CD8-positive, alpha-beta memory T cell (primary cell): ENCODE measurements at regions of chr17 and their contacts with region 1.

Region 1: GRCh38 chr17:68205251-68205807 is 42.5 kb upstream of the AMZ2 start:
- DNase-seq: peak; percentile 88 to 92 (median 90)
- H3K4me3 ChIP-seq: peak overlapping the region; percentile 58
- H3K4me3 Mint-ChIP-seq: peak overlapping the region; percentile 87 to 97 (median 91)
- H3K27ac ChIP-seq: peak overlapping the region; percentile 69
- H3K27ac Mint-ChIP-seq: peak overlapping the region; percentile 84 to 96 (median 90)
- H3K4me1 ChIP-seq: peaks cover 14% of the 10 kb centered on the region
- H3K4me1 Mint-ChIP-seq: peaks cover 29 to 48% (median 32%) of the 10 kb centered on the region in 3 donors
- H3K27me3 ChIP-seq: no peaks in the 10 kb centered on the region
- H3K27me3 Mint-ChIP-seq: peaks cover 0 to 2% of the 10 kb centered on the region in 2 donors

Region 2: DNA sequence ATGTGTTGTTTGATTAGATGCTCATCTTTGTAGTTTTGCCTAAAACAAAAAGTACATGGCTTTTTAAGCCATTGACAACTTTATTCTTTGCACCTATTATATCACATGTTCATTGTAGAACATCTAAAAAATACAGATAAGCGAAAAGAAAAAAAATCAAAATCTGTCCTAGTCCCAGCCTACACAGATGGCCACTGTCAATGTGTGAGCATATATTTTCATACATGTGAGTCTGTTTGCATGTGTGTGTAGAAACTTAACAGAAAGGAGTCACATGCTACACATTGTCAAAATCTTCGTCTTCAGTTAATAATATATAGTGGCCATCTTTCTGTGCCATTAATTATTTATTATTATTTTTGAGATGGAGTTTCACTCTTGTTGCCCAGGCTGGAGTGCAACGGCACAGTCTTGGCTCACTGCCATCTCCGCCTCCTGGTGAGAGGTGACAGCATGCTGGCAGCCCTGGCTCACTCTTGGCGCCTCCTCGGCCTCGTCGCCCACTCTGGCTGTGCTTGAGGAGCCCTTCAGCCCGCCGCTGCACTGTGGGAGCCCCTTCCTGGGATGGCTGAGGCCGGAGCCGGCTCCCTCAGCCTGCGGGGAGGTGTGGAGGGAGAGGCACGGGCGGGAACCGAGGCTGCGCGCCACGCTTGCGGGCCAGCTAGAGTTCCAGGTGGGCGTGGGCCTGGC is 25.9 kb before region 1 on chr17:
- CTCF ChIA-PET with region 1: interaction called, 183 read pairs
- POLR2A ChIA-PET with region 1: interaction called, 171 read pairs
- DNase-seq: no peak
- H3K4me3 ChIP-seq: no peak overlapping the region
- H3K4me3 Mint-ChIP-seq: peak overlapping the region in 1 of 7 donors; percentile 24
- H3K27ac ChIP-seq: no peak overlapping the region
- H3K27ac Mint-ChIP-seq: no peak overlapping the region
- H3K4me1 ChIP-seq: peaks cover 31% of the 10 kb centered on the region
- H3K4me1 Mint-ChIP-seq: peaks cover 33 to 62% (median 33%) of the 10 kb centered on the region in 3 donors
- H3K27me3 ChIP-seq: no peaks in the 10 kb centered on the region
- H3K27me3 Mint-ChIP-seq: no peaks in the 10 kb centered on the region

Region 3: GRCh38 chr17:68190495-68190894 is 14.8 kb before region 1 on chr17:
- CTCF ChIA-PET with region 1: interaction called, 183 read pairs
- POLR2A ChIA-PET with region 1: interaction called, 171 read pairs
- DNase-seq: no peak
- H3K4me3 ChIP-seq: no peak overlapping the region
- H3K4me3 Mint-ChIP-seq: no peak overlapping the region
- H3K27ac ChIP-seq: no peak overlapping the region
- H3K27ac Mint-ChIP-seq: peak overlapping the region in 7 of 8 donors; percentile 14 to 74 (median 55)
- H3K4me1 ChIP-seq: peaks cover 14% of the 10 kb centered on the region
- H3K4me1 Mint-ChIP-seq: peaks cover 25 to 70% (median 62%) of the 10 kb centered on the region in 3 donors
- H3K27me3 ChIP-seq: no peaks in the 10 kb centered on the region
- H3K27me3 Mint-ChIP-seq: peaks cover 0 to 2% of the 10 kb centered on the region in 2 donors

Region 4: DNA sequence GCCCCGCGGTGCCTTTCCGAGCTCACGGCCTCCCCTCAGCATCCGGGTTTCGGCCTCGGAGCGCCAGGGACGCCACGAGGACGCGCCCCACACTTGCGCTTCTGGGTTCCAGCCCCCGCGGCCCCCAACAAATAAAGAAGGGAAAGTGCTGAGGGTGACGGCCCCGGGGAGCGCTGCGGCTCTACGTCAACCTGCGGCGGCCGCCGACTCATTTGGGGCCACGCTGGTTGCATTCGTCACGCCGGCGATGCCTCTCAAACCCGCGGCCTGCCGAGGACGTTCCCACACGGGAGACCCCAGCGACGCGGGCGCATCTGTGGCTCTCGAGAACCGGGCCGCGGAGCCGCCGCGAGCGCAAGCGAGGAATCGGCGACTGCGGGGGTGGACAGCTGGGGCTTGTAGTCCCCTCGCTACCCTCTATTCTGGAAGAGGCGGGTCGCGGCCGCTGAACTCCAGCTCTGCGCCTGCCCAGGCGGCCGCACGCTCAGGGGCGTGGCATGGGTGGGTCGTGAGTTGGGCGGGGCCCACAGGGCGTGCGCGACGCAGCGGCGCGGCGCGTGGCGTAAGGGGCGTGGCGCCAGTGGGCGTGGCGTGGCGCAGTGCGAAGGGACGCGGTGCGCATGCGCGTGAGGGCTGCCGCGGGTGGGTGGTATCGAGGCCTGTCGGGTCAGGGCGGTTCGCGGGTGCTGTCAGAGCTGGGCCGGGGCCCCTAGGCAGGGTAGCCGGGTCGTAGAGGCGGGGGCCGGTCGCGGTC is 42.3 kb after region 1 on chr17 and contains the start of gene AMZ2:
- CTCF ChIA-PET with region 1: interaction called, 34 read pairs
- POLR2A ChIA-PET with region 1: interaction called, 53 read pairs
- DNase-seq: peak; percentile 95 to 99 (median 98)
- H3K4me3 ChIP-seq: peak within 1 kb of the TSS; percentile 97
- H3K4me3 Mint-ChIP-seq: peak within 1 kb of the TSS; percentile 87 to 98 (median 96)
- H3K27ac ChIP-seq: peak within 1 kb of the TSS; percentile 96
- H3K27ac Mint-ChIP-seq: peak within 1 kb of the TSS; percentile 96 to 100 (median 98)
- H3K4me1 ChIP-seq: peaks cover 34% of the 10 kb centered on the region
- H3K4me1 Mint-ChIP-seq: peaks cover 35 to 63% (median 53%) of the 10 kb centered on the region in 3 donors
- H3K27me3 ChIP-seq: no peaks in the 10 kb centered on the region
- H3K27me3 Mint-ChIP-seq: peaks cover 0 to 8% of the 10 kb centered on the region in 2 donors
- total RNA-seq, gene AMZ2: 113 to 118 TPM

Region 5: DNA sequence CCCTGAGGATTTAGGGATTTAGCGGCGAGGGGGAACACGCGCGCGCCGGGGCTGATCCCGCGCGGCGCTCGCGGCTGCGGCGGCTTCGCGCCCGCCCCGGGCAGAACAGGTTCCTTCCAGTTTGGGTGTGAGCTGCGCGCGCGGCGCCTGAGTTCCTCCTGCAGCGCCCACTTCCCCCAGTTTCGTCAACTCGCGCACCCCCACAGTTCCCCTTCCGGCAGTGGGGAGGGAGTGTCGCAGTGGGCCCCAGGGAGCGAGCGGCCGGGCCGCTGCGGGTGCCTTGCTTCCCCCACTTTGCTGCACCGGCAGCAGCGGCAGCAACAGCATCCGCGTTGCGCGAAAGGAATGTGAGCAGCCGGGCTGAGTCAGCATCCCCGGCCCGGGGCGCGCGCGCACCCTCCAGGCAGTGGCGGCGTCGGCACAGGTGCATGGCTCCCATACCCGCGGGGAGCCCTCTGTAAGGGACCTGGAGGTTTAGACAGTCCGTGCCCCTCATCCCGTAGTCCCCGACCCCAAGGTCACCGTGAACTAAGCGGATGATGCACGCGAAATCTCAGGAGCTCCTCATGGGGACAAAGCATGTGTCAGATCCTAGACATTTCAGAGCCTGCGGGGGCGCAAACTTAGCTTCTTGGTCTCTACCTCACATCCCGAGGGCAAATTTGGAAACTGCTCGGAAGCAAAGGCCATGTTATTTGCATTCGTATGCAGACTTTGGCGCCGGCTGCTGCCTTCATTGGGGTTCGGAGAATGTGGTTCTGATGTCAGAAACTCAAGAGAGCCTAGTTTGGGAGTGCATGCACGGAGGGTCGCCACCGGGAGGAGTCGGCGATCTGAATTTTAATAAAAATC is 86.7 kb after region 1 on chr17:
- CTCF ChIA-PET with region 1: interaction called, 4 read pairs
- POLR2A ChIA-PET with region 1: interaction called, 16 read pairs
- DNase-seq: peak; percentile 92 to 98 (median 97)
- H3K4me3 ChIP-seq: peak overlapping the region; percentile 68
- H3K4me3 Mint-ChIP-seq: peak overlapping the region; percentile 84 to 100 (median 85)
- H3K27ac ChIP-seq: peak overlapping the region; percentile 94
- H3K27ac Mint-ChIP-seq: peak overlapping the region; percentile 84 to 100 (median 94)
- H3K4me1 ChIP-seq: peaks cover 61% of the 10 kb centered on the region
- H3K4me1 Mint-ChIP-seq: peaks cover 55 to 83% (median 69%) of the 10 kb centered on the region in 3 donors
- H3K27me3 ChIP-seq: no peaks in the 10 kb centered on the region
- H3K27me3 Mint-ChIP-seq: no peaks in the 10 kb centered on the region

Region 6: GRCh38 chr17:68457539-68458259 is 252.4 kb after region 1 on chr17:
- CTCF ChIA-PET with region 1: interaction called, 10 read pairs
- POLR2A ChIA-PET with region 1: interaction called, 5 read pairs
- DNase-seq: peak; percentile 98 to 99 (median 99)
- H3K4me3 ChIP-seq: peak overlapping the region; percentile 69
- H3K4me3 Mint-ChIP-seq: peak overlapping the region; percentile 87 to 91 (median 89)
- H3K27ac ChIP-seq: peak overlapping the region; percentile 64
- H3K27ac Mint-ChIP-seq: peak overlapping the region; percentile 57 to 98 (median 93)
- H3K4me1 ChIP-seq: peaks cover 53% of the 10 kb centered on the region
- H3K4me1 Mint-ChIP-seq: peaks cover 60 to 68% (median 64%) of the 10 kb centered on the region in 3 donors
- H3K27me3 ChIP-seq: no peaks in the 10 kb centered on the region
- H3K27me3 Mint-ChIP-seq: no peaks in the 10 kb centered on the region